MCF 10A (cell line): ENCODE measurements at regions of chr2 and their contacts with region 1.

Region 1: GRCh38 chr2:167212014-167212648 is 323.9 kb downstream of the XIRP2 start:
- DNase-seq: peak; percentile 75
- H3K4me3 Mint-ChIP-seq: no peak overlapping the region
- H3K27ac Mint-ChIP-seq: no peak overlapping the region
- H3K4me1 Mint-ChIP-seq: no peaks in the 10 kb centered on the region
- H3K27me3 Mint-ChIP-seq: no peaks in the 10 kb centered on the region
- CTCF ChIP-seq: peak; percentile 60

Region 2: GRCh38 chr2:166539340-166540162 is 672.6 kb before region 1 on chr2:
- CTCF ChIA-PET with region 1: interaction called, 21 read pairs
- POLR2A ChIA-PET with region 1: no interaction called
- intact Hi-C with region 1: loop called (anchors 1 kb)
- DNase-seq: peak; percentile 81
- H3K4me3 Mint-ChIP-seq: no peak overlapping the region
- H3K27ac Mint-ChIP-seq: no peak overlapping the region
- H3K4me1 Mint-ChIP-seq: no peaks in the 10 kb centered on the region
- H3K27me3 Mint-ChIP-seq: peaks cover 72% of the 10 kb centered on the region
- CTCF ChIP-seq: peak; percentile 72

Region 3: DNA sequence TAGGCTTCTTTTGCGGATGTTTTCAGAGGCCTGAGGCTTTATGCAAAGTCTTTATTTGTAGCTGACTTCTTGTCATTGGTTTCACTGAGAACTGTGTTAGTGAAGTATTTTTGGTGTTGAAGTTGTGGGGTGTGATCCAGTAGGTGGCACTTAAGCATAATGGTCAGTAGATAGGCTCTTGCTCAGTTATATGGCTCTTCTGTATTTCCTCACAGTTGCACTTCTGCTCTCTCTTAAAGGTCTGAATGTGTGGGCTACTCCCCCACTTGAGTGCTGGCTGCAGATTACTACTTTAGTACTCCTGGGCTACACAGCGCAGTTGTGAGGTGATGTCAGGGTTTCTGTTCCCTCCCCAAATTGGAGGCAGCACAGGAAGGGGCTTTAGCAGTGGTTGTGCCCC is 584.2 kb before region 1 on chr2:
- CTCF ChIA-PET with region 1: no interaction called
- POLR2A ChIA-PET with region 1: no interaction called
- intact Hi-C with region 1: loop called (anchors 5 kb)
- DNase-seq: no peak
- H3K4me3 Mint-ChIP-seq: no peak overlapping the region
- H3K27ac Mint-ChIP-seq: no peak overlapping the region
- H3K4me1 Mint-ChIP-seq: peaks cover 9% of the 10 kb centered on the region
- H3K27me3 Mint-ChIP-seq: no peaks in the 10 kb centered on the region
- CTCF ChIP-seq: no peak

Region 4: DNA sequence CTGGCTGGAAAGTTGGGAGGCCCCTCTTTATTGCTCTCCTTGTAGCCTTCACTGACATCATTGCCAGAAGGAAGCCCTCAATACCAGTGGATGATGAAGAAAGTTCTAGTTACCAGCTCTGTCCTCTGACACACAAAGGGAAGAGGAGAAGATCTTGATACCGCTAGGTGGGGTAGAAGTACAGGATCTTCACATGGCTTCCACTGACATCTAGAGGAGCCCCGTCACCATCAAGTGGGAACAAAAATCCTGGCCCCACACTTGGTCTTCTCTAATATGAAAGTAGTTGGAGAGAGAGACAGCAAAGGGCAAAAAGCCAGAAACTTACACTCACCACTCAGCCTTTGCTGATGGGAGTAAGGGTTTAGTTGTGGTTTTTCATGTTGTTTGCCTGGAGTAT is 311.4 kb before region 1 on chr2:
- CTCF ChIA-PET with region 1: interaction called, 5 read pairs
- POLR2A ChIA-PET with region 1: no interaction called
- intact Hi-C with region 1: loop called (anchors 1 kb)
- DNase-seq: peak; percentile 59
- H3K4me3 Mint-ChIP-seq: no peak overlapping the region
- H3K27ac Mint-ChIP-seq: no peak overlapping the region
- H3K4me1 Mint-ChIP-seq: no peaks in the 10 kb centered on the region
- H3K27me3 Mint-ChIP-seq: peaks cover 46% of the 10 kb centered on the region
- CTCF ChIP-seq: peak; percentile 34

Region 5: DNA sequence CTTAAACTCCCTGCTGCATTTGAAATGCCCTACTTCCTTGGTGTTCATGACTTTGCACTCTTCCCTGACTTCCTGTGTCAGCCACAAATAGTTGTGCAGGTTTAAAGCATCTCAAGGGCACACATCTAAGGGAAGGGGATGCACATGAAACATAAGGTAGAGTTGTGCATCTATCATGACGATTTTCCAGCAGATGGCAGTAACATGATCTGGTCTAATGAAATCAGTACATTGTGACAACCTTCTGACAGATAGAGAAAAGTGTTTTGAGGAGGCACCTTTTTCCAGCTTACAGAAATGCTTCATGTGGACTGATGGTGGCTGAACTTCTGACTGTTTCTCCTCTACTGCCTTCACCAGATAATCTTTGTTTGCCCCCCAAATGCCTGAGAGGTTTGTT is 85.0 kb before region 1 on chr2:
- CTCF ChIA-PET with region 1: interaction called, 29 read pairs
- POLR2A ChIA-PET with region 1: no interaction called
- intact Hi-C with region 1: loop called (anchors 1 kb)
- DNase-seq: peak; percentile 47
- H3K4me3 Mint-ChIP-seq: no peak overlapping the region
- H3K27ac Mint-ChIP-seq: no peak overlapping the region
- H3K4me1 Mint-ChIP-seq: no peaks in the 10 kb centered on the region
- H3K27me3 Mint-ChIP-seq: peaks cover 10% of the 10 kb centered on the region
- CTCF ChIP-seq: peak; percentile 27

Region 6: DNA sequence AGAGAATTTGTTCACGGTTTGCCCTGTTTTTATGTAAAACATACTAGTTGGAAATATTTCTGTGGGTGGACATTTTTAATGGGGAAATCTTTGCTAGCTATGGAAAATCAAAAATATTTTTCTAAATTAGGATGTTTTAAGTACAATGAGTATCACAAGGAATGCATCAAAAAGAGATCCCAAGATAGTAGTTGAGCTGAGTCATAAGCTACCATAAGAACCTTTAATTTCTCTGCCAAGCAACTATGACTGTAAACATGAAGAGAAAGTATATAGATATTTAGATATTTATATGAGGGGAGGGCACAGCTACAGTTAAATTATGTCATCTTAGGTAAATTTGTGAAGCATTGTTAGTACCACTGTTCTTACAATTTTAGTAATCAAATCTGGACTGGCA is 322.3 kb after region 1 on chr2:
- CTCF ChIA-PET with region 1: no interaction called
- POLR2A ChIA-PET with region 1: no interaction called
- intact Hi-C with region 1: no loop called
- DNase-seq: no peak
- H3K4me3 Mint-ChIP-seq: no peak overlapping the region
- H3K27ac Mint-ChIP-seq: no peak overlapping the region
- H3K4me1 Mint-ChIP-seq: no peaks in the 10 kb centered on the region
- H3K27me3 Mint-ChIP-seq: peaks cover 10% of the 10 kb centered on the region
- CTCF ChIP-seq: no peak